ENCODE measurements at regions of chr9 and their contacts with region 1.

Region 1: GRCh38 chr9:99579964-99580363 is 241.7 kb upstream of the NR4A3 start:
- DNase-seq: no peak
- ATAC-seq: peak; percentile 66

Region 2: GRCh38 chr9:99158629-99159028 is 421.3 kb before region 1 on chr9:
- intact Hi-C with region 1: loop called (anchors 5 kb)
- DNase-seq: no peak
- ATAC-seq: no peak

Region 3: DNA sequence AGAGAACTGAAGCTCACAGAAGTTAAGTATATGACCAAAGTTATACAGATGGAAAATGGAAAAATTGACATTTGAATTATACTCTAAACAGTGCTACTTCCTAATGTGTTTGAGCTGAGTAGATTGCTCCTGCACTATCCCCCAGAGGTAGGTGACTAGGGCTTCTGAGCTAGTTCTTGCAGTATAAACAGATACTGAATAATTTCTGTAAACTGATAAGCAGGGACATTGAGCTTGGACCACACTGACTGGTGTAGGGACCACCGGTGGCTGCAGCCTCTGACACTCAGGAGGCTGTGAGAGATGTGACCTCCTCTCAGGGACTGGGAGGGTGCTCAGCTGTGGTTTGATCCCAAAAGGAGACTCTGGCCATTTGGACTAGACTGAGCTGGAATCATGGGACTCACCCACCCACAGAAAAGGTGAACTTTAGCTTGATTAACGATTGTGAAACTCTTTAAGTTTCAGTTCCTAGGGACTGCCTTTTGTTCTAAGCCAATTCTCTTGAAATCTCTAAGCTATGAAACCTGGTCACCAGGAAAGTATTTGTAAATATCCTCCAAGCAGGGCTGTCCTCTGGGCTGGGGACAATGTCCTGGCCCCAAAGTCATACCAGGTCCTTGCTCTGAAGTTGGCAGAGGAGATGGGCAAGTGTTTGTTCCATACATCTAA is 66.4 kb before region 1 on chr9:
- intact Hi-C with region 1: loop called (anchors 10 kb)
- DNase-seq: no peak
- ATAC-seq: no peak